Right ventricle myocardium superior (tissue), 1 donor: ENCODE measurements at regions of chr18 and their contacts with region 1.

Region 1: DNA sequence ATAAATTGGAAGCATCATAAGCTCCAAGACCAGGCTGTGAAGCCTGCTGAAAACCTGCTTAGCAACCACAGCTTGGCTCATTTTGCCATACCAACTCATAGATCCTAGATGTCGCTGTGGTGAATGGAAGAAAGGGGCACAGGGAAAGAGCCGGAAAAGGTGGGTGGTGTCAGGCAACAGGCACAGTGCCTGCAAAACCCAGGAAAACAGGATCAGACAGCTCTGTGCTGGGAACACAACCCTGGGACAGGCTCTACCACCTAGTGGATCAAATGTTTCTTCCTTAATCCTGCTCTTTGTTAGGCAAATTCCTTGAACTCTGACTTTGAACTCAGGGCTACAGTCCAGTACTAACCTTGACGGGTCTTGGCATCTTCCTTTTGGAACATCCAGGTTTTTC is 31.6 kb downstream of the TWSG1 start:
- DNase-seq: no peak
- ATAC-seq: peak; percentile 52

Region 2: GRCh38 chr18:9319333-9319732 is 46.9 kb before region 1 on chr18:
- intact Hi-C with region 1: no loop called
- DNase-seq: no peak
- ATAC-seq: no peak

Region 3: GRCh38 chr18:9516437-9517064 is 150.4 kb after region 1 on chr18:
- intact Hi-C with region 1: loop called (anchors 10 kb)
- DNase-seq: no peak
- ATAC-seq: peak; percentile 60